GM18951 (cell line): ENCODE measurements at regions of chr5 and their contacts with region 1.

Region 1: GRCh38 chr5:139708877-139709581 is 60.9 kb downstream of the CXXC5 start:
- POLR2A ChIP-seq: no peak

Region 2: GRCh38 chr5:139648205-139649081 is 60.6 kb before region 1 on chr5 and contains the start of gene CXXC5:
- in situ Hi-C with region 1: loop called (anchors 5 kb)
- POLR2A ChIP-seq: peak; percentile 79

Region 3: GRCh38 chr5:140424135-140424534 is 715.1 kb after region 1 on chr5:
- in situ Hi-C with region 1: no loop called
- POLR2A ChIP-seq: no peak